Gastrocnemius medialis (tissue), 4 donors: ENCODE measurements at regions of chr19 and their contacts with region 1.

Region 1: DNA sequence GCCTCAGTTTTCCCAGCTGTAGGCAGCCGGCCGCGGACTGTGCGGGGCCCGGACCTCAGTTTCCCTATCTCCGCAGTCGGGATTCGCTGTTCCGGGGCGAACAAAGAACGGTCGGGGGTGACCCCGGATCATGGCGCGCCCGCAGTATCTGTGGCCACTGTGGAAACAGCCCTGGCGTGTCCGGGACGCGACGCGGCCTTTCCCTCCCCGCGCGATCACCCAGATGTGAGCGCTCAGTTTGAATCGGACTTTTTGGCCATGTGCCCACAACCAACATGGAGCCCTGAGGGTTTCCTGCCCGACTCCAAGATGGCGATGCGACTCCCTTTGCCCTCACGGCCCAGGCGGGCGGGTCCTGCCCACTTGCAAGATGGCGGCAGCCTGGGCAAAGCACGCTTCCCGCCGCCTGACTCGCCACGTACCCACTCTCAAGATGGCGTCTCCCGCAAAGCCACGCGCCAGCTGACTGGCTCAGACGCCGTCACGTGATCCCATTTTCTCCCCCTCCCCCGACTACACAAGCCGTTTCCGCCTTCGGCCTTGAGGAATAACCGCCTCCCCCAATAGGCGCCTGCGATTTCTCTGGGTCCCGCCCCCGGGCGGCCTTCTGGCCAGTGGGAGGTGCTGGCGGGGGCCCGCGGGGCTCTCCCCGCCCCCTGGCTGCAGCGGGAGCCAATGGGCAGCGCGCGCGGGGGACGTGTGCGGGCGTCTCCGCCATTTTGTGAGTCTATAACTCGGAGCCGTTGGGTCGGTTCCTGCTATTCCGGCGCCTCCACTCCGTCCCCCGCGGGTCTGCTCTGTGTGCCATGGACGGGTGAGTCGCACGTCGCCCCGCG is at the start of gene PTBP1:
- DNase-seq: peak; percentile 100
- ATAC-seq: peak; percentile 91
- H3K4me3 ChIP-seq: peak within 1 kb of the TSS; percentile 79 to 98 (median 92)
- H3K27ac ChIP-seq: peak within 1 kb of the TSS; percentile 91 to 99 (median 94)
- H3K4me1 ChIP-seq: peaks cover 48 to 50% of the 10 kb centered on the region in 2 donors
- H3K27me3 ChIP-seq: no peaks in the 10 kb centered on the region
- CTCF ChIP-seq: peak in 4 of 5 experiments; percentile 28 to 58 (median 38)
- POLR2A ChIP-seq: peak; percentile 83
- total RNA-seq, gene PTBP1: 29.8 to 51.7 (median 36.7) TPM

Region 2: GRCh38 chr19:506404-507285 is 290.3 kb before region 1 on chr19:
- in situ Hi-C with region 1: no loop called
- intact Hi-C with region 1: loop called (anchors 1 kb)
- DNase-seq: peak; percentile 99
- ATAC-seq: peak; percentile 94 to 96
- H3K4me3 ChIP-seq: peak overlapping the region; percentile 88 to 100 (median 96)
- H3K27ac ChIP-seq: peak overlapping the region; percentile 90 to 99 (median 91)
- H3K4me1 ChIP-seq: peaks cover 14 to 25% of the 10 kb centered on the region in 2 donors
- H3K27me3 ChIP-seq: no peaks in the 10 kb centered on the region
- CTCF ChIP-seq: peak; percentile 93 to 97 (median 96)
- POLR2A ChIP-seq: no peak

Region 3: DNA sequence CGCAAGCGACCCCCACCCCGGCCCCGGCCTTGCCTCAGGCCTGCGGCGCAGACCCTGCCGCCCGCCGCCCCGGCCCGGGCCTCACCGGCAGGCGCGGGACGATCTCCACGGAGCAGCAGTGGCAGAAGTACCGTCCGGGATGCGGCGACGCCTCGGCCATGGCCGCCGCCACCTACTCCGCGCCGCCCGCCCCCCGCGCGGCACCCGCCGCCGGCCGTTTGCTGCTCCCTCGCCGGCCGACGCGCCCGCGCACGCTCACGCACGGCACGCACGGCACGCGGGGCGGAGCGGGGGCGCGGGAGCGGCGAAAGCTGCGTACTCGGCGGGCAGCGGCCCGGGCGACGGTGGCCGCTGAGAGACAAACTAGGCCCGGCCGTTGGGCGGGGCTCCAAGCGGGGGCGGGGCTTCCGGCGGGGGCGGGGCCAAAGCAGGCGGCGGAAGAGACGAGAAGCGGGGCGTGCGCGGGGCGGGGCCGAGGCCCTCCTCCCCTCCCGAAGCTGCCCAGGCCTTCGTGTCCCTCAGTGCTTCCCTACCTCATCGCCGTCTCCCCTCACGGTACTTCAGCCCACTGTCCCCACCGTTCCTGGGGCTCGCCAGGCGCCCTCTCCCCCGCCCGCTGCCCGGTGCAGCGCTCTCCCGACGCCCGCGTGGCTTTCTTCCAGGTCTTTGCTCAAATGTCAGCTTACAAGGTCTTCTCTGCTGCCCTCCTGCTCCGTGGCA is 133.8 kb before region 1 on chr19 and contains the start of gene RNF126:
- in situ Hi-C with region 1: no loop called
- intact Hi-C with region 1: loop called (anchors 5 kb)
- DNase-seq: peak; percentile 83 to 92
- ATAC-seq: peak; percentile 83 to 89
- H3K4me3 ChIP-seq: peak within 1 kb of the TSS; percentile 88 to 97 (median 91)
- H3K27ac ChIP-seq: peak within 1 kb of the TSS; percentile 93 to 100 (median 96)
- H3K4me1 ChIP-seq: peaks cover 28 to 59% of the 10 kb centered on the region in 2 donors
- H3K27me3 ChIP-seq: no peaks in the 10 kb centered on the region
- CTCF ChIP-seq: peak in 1 of 5 experiments; percentile 14
- POLR2A ChIP-seq: peak; percentile 83 to 90
- total RNA-seq, gene RNF126: 72.3 to 148 (median 129) TPM

Region 4: DNA sequence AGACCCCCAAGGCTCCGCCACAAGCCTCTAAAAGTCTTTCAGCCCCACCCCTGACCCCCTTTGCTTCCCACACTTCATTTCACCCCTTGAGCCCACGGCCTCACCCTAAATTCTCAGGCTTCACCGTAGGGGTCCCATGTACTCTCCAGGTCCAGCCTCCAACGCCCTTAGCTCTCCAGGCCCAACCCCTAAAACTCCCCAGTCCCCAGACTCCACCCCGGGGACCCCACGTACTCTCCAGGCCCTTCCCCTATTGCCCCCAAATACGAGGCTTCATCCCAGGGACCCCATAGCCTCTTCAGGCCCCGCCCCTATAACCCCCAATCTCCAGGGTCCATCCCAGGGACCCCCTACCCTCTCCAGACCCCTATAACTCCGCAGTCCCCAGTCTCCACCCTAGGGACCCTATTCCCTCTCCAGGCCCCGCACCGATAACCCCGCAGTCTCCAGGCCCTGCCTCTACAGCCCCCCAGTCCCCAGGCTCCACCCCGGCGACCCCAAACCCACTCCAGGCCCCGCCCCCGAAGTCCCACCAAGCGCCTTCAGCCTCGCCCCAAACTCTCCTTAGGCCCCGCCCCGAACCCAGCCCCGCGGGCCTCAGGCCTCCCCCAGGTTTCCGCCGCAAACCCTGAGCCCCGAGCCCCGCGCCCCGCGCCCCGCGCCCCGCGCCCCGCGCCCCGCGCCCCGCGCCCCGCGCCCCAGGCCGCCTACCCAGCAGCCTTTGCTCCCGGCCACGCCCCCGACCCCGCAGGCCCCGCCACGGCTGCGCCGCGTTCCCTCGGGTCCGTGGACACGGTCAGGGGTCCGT is 95.5 kb after region 1 on chr19:
- in situ Hi-C with region 1: no loop called
- intact Hi-C with region 1: loop called (anchors 1 kb)
- DNase-seq: no peak
- ATAC-seq: peak; percentile 65 to 71
- H3K4me3 ChIP-seq: peak overlapping the region; percentile 73 to 84 (median 75)
- H3K27ac ChIP-seq: peak overlapping the region; percentile 81 to 91 (median 88)
- H3K4me1 ChIP-seq: peaks cover 0 to 9% of the 10 kb centered on the region in 2 donors
- H3K27me3 ChIP-seq: no peaks in the 10 kb centered on the region
- CTCF ChIP-seq: peak in 1 of 5 experiments; percentile 6
- POLR2A ChIP-seq: no peak

Region 5: DNA sequence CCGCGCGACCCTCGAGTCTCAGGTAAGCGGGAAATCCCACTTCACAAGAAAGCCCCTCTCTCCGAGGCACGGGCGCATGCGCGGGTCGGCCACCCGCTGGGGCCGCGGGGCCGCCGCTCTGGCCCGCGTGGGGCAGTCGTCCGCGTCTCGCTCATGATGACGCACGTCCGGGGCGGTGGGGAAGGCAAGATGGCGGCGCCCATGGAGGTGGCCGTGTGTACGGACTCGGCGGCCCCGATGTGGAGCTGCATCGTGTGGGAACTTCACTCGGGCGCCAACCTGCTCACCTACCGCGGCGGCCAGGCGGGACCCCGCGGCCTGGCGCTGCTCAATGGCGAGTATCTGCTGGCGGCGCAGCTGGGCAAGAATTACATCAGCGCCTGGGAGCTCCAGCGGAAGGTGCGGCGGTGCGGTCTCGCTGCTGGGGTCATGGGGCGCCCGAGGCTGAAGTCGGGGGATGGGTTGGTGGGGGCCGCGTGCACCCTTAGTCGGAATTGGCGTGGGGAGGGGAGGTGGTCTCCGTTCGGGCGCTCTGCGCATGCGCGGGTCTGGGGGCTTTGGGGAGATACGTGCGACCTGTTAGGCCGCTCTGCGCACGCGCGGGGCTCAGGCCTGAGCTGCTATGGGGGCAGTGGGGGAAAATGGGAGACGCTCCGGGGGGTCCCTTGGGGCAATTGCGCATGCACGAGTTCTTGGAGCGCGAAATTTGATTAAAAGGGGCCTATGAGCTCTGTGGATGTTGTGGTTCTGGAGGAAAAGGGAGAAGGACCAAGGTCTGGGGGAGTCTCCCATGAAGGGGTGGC is 187.5 kb after region 1 on chr19 and contains the start of gene WDR18:
- in situ Hi-C with region 1: no loop called
- intact Hi-C with region 1: loop called (anchors 1 kb)
- DNase-seq: peak; percentile 89
- ATAC-seq: peak; percentile 91
- H3K4me3 ChIP-seq: peak within 1 kb of the TSS; percentile 87 to 98 (median 94)
- H3K27ac ChIP-seq: peak within 1 kb of the TSS; percentile 85 to 97 (median 92)
- H3K4me1 ChIP-seq: peaks cover 17 to 19% of the 10 kb centered on the region in 2 donors
- H3K27me3 ChIP-seq: peaks cover 0 to under 1% (median 0%) of the 10 kb centered on the region in 3 donors
- CTCF ChIP-seq: peak; percentile 4 to 45 (median 23)
- POLR2A ChIP-seq: peak; percentile 52 to 62
- total RNA-seq, gene WDR18: 4.4 to 59.0 (median 28.6) TPM

Region 6: GRCh38 chr19:1652471-1653299 is 855.8 kb after region 1 on chr19 and contains the start of gene TCF3:
- in situ Hi-C with region 1: no loop called
- intact Hi-C with region 1: loop called (anchors 2 kb)
- DNase-seq: peak; percentile 94 to 98
- ATAC-seq: peak; percentile 98 to 99
- H3K4me3 ChIP-seq: peak within 1 kb of the TSS; percentile 69 to 85 (median 80)
- H3K27ac ChIP-seq: peak within 1 kb of the TSS; percentile 89 to 100 (median 98)
- H3K4me1 ChIP-seq: peaks cover 11% of the 10 kb centered on the region in 2 donors
- H3K27me3 ChIP-seq: no peaks in the 10 kb centered on the region
- CTCF ChIP-seq: peak in 2 of 5 experiments; percentile 26 to 39
- POLR2A ChIP-seq: peak; percentile 20 to 63
- total RNA-seq, gene TCF3: 22.0 to 58.6 (median 42.5) TPM